GM12878 (cell line): ENCODE measurements at regions of chr16 and their contacts with region 1.

Region 1: DNA sequence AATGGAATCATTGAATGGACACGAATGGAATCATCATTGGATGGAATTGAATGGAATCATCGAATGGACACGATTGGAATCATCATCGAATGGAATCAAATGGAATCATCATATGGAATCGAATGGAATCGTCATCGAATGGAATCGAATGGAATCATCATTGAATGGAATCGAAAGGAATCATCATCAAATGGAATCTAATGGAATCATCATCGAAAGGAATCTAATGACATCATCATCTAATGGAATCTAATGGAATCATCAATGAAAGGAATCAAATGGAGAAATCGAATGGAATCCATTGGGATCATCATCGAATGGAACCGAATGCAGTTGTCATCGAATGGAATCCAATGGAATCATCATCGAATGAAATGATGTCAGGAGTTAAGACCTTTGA is 155.0 kb downstream of the SHCBP1 start:
- DNase-seq: no peak
- ATAC-seq: no peak
- H3K4me3 ChIP-seq: no peak overlapping the region
- H3K27ac ChIP-seq: no peak overlapping the region
- H3K4me1 ChIP-seq: no peaks in the 10 kb centered on the region
- H3K27me3 ChIP-seq: no peaks in the 10 kb centered on the region
- CTCF ChIP-seq: no peak
- EP300 ChIP-seq: no peak
- POLR2A ChIP-seq: no peak
- RAD21 ChIP-seq: no peak

Region 2: DNA sequence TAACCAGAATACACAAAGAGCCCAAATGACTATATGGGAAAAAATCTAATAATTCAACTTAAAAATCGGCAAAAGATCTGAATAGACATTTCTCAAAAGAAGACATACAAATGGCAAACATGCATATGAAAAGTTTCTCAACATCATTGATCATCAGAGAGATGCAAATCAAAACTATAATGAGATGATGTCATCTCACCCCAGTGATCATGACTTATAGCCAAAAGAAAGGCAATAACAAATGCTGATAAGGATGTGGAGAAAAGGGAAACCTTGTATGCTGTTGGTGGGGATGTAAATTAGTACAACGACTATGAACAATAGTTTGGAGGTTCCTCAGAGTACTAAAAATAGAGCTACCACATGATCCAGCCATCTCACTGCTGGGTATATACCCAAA is 46.7 kb after region 1 on chr16:
- CTCF ChIA-PET with region 1: no interaction called
- POLR2A ChIA-PET with region 1: no interaction called
- RAD21 ChIA-PET with region 1: no interaction called
- SMC1A ChIA-PET with region 1: no interaction called
- in situ Hi-C with region 1: no loop called
- intact Hi-C with region 1: loop called (anchors 5 kb)
- DNase-seq: no peak
- ATAC-seq: no peak
- H3K4me3 ChIP-seq: no peak overlapping the region
- H3K27ac ChIP-seq: no peak overlapping the region
- H3K4me1 ChIP-seq: no peaks in the 10 kb centered on the region
- H3K27me3 ChIP-seq: no peaks in the 10 kb centered on the region
- CTCF ChIP-seq: no peak
- EP300 ChIP-seq: no peak
- POLR2A ChIP-seq: no peak
- RAD21 ChIP-seq: no peak